ENCODE measurements at regions of chr2 and their contacts with region 1.

Region 1: GRCh38 chr2:216519154-216519762 is 20.6 kb downstream of the RPL37A start:
- DNase-seq: peak in 8 of 9 donors; percentile 15 to 52 (median 39)
- ATAC-seq: peak; percentile 65
- H3K4me3 ChIP-seq: no peak overlapping the region
- H3K4me3 Mint-ChIP-seq: no peak overlapping the region
- H3K27ac ChIP-seq: no peak overlapping the region
- H3K27ac Mint-ChIP-seq: no peak overlapping the region
- H3K4me1 ChIP-seq: no peaks in the 10 kb centered on the region
- H3K4me1 Mint-ChIP-seq: peaks cover 0 to 4% (median 0%) of the 10 kb centered on the region in 7 donors
- H3K27me3 ChIP-seq: no peaks in the 10 kb centered on the region
- H3K27me3 Mint-ChIP-seq: no peaks in the 10 kb centered on the region

Region 2: GRCh38 chr2:216478151-216478550 is 41.1 kb before region 1 on chr2:
- CTCF ChIA-PET with region 1: no interaction called
- POLR2A ChIA-PET with region 1: no interaction called
- intact Hi-C with region 1: no loop called
- DNase-seq: no peak
- ATAC-seq: no peak
- H3K4me3 ChIP-seq: no peak overlapping the region
- H3K4me3 Mint-ChIP-seq: no peak overlapping the region
- H3K27ac ChIP-seq: no peak overlapping the region
- H3K27ac Mint-ChIP-seq: no peak overlapping the region
- H3K4me1 ChIP-seq: peaks cover 0 to 13% of the 10 kb centered on the region in 2 donors
- H3K4me1 Mint-ChIP-seq: peaks cover 13 to 22% (median 16%) of the 10 kb centered on the region in 7 donors
- H3K27me3 ChIP-seq: no peaks in the 10 kb centered on the region
- H3K27me3 Mint-ChIP-seq: no peaks in the 10 kb centered on the region

Region 3: DNA sequence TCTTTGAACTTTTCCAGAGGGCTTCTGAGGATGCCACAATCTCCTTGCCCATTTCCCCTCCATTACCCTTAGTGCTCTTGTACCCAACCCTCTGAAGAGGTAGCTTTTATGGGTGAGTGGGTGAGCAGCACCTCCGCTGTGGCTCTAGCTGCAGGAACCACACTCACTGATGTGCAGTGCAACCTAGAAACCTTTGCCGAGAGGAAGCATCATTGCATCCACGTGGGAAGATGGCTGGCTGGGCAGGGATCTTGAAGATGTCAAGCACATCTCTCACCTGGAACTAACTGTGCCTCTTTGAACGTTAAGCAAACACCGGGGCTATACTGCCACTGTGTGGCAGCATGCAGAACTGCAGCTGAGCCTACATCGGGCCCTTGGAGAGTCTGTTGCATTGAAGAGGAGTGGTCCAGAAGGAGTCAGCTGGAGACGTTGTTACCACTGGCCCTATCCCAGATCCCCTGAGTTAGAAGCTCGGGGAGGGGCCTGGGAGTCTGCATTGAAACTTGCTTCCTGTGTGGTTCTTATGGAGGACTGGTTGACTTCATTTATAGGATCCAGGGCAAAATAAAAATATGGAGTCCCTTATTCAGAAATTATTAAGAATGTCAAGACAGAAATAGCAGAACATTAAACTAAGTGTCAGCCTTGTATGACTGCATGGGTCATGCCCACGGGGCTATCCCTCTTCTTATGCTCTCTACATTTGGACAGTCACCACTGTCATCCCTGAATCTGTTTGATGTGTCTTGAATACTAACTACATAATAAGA is 147.4 kb after region 1 on chr2:
- CTCF ChIA-PET with region 1: interaction called, 8 read pairs
- POLR2A ChIA-PET with region 1: no interaction called
- intact Hi-C with region 1: loop called in 1 of 2 experiments (anchors 1 kb)
- DNase-seq: peak; percentile 36 to 75 (median 62)
- ATAC-seq: peak; percentile 88
- H3K4me3 ChIP-seq: no peak overlapping the region
- H3K4me3 Mint-ChIP-seq: no peak overlapping the region
- H3K27ac ChIP-seq: no peak overlapping the region
- H3K27ac Mint-ChIP-seq: no peak overlapping the region
- H3K4me1 ChIP-seq: no peaks in the 10 kb centered on the region
- H3K4me1 Mint-ChIP-seq: peaks cover 0 to 2% (median 0%) of the 10 kb centered on the region in 7 donors
- H3K27me3 ChIP-seq: no peaks in the 10 kb centered on the region
- H3K27me3 Mint-ChIP-seq: peaks cover 0 to 12% (median 10%) of the 10 kb centered on the region in 5 donors

Region 4: GRCh38 chr2:216700781-216701180 is 181.5 kb after region 1 on chr2:
- CTCF ChIA-PET with region 1: no interaction called
- POLR2A ChIA-PET with region 1: no interaction called
- intact Hi-C with region 1: no loop called
- DNase-seq: no peak
- ATAC-seq: no peak
- H3K4me3 ChIP-seq: no peak overlapping the region
- H3K4me3 Mint-ChIP-seq: no peak overlapping the region
- H3K27ac ChIP-seq: no peak overlapping the region
- H3K27ac Mint-ChIP-seq: no peak overlapping the region
- H3K4me1 ChIP-seq: no peaks in the 10 kb centered on the region
- H3K4me1 Mint-ChIP-seq: peaks cover 0 to 11% (median 4%) of the 10 kb centered on the region in 7 donors
- H3K27me3 ChIP-seq: no peaks in the 10 kb centered on the region
- H3K27me3 Mint-ChIP-seq: peaks cover 5 to 27% (median 17%) of the 10 kb centered on the region in 5 donors

Region 5: DNA sequence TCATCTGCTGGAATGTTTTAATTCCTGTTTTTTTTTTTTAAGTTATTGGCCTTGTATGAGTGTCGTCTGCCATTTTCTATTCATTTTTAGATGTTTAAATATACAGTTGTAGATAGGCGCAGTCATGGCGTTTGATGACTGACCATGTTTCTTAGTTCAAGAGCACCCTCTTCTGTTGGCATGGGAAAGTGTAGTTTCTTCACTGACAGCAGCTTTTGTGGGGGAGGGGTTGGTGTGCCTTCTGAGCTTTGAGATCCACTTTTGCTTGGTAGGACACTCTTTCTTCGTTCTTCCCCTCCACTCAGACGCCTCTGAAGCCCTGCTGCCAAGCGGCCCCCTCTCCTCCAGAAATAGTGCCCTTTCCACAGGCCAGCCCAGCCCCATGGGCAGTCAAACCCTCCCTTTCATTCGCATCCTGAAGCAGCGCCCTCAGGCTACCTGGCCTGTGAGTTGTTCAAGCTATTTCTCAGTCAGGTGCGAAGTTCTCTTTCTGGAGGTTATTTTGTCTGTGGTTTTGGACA is 991.6 kb after region 1 on chr2:
- CTCF ChIA-PET with region 1: no interaction called
- POLR2A ChIA-PET with region 1: no interaction called
- intact Hi-C with region 1: loop called in 1 of 2 experiments (anchors 5 kb)
- DNase-seq: peak in 8 of 9 donors; percentile 11 to 59 (median 40)
- ATAC-seq: peak; percentile 82
- H3K4me3 ChIP-seq: no peak overlapping the region
- H3K4me3 Mint-ChIP-seq: peak overlapping the region in 2 of 10 donors; percentile 14 to 20
- H3K27ac ChIP-seq: no peak overlapping the region
- H3K27ac Mint-ChIP-seq: no peak overlapping the region
- H3K4me1 ChIP-seq: no peaks in the 10 kb centered on the region
- H3K4me1 Mint-ChIP-seq: peaks cover 0 to 13% (median 7%) of the 10 kb centered on the region in 7 donors
- H3K27me3 ChIP-seq: no peaks in the 10 kb centered on the region
- H3K27me3 Mint-ChIP-seq: peaks cover 4 to 19% (median 7%) of the 10 kb centered on the region in 5 donors

Region 6: DNA sequence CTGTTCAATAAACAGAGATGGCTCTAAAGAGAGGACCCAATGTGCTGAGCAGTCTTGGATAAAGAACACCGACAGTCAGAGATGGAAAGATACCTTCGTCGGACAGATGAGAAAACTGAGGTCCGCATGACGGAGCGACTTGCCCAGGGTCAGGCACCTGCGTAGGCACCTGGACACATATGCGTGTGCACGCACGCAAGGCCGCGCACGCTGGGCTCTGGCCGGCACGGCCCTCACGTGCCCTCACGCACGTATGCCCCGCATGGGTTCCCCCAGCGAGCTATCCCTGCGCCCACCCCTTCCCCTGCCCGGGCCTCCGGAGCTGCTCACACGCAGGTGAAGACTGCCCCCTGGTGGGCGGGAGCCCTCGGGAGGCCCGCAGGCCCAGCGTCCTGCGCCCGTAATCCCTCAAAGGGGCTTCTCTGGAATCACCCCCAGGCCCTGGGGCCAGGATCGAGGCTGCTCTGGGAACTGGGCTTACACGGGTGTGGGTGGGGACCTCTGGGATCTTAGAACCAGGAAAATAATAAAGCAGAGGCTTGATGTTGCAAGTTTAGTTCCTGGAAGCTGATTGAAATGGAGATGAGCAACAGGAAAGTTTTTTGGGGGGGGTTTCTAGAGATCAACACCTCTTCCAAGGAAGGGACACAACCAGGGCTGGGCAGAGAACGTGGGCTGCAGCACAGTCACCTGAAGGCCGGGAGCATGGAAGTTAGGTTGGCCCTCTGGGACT is 1237.3 kb after region 1 on chr2:
- CTCF ChIA-PET with region 1: no interaction called
- POLR2A ChIA-PET with region 1: no interaction called
- intact Hi-C with region 1: loop called in 1 of 2 experiments (anchors 1 kb)
- DNase-seq: peak; percentile 48 to 76 (median 69)
- ATAC-seq: peak; percentile 91
- H3K4me3 ChIP-seq: peak overlapping the region; percentile 51
- H3K4me3 Mint-ChIP-seq: peak overlapping the region; percentile 9 to 73 (median 62)
- H3K27ac ChIP-seq: no peak overlapping the region
- H3K27ac Mint-ChIP-seq: peak overlapping the region in 1 of 9 donors; percentile 51
- H3K4me1 ChIP-seq: peaks cover 0 to 26% of the 10 kb centered on the region in 2 donors
- H3K4me1 Mint-ChIP-seq: peaks cover 18 to 36% (median 25%) of the 10 kb centered on the region in 7 donors
- H3K27me3 ChIP-seq: no peaks in the 10 kb centered on the region
- H3K27me3 Mint-ChIP-seq: peaks cover 0 to 11% (median 0%) of the 10 kb centered on the region in 5 donors